H1 (cell line): ENCODE measurements at regions of chr12 and their contacts with region 1.

Region 1: GRCh38 chr12:98606357-98606988 is 13.0 kb downstream of the SLC25A3 start:
- DNase-seq: no peak
- H3K4me3 ChIP-seq: no peak overlapping the region
- H3K27ac ChIP-seq: no peak overlapping the region
- H3K4me1 ChIP-seq: no peaks in the 10 kb centered on the region
- H3K27me3 ChIP-seq: no peaks in the 10 kb centered on the region
- CTCF ChIP-seq: no peak
- EP300 ChIP-seq: no peak
- POLR2A ChIP-seq: no peak
- RAD21 ChIP-seq: no peak

Region 2: GRCh38 chr12:98418357-98419075 is 188.0 kb before region 1 on chr12:
- CTCF ChIA-PET with region 1: no interaction called
- POLR2A ChIA-PET with region 1: no interaction called
- DNase-seq: no peak
- H3K4me3 ChIP-seq: no peak overlapping the region
- H3K27ac ChIP-seq: no peak overlapping the region
- H3K4me1 ChIP-seq: peaks cover 0 to 4% (median 3%) of the 10 kb centered on the region in 4 experiments; a peak in 4 of 7 replicates
- H3K27me3 ChIP-seq: no peaks in the 10 kb centered on the region
- CTCF ChIP-seq: no peak
- EP300 ChIP-seq: no peak
- POLR2A ChIP-seq: no peak
- RAD21 ChIP-seq: no peak

Region 3: DNA sequence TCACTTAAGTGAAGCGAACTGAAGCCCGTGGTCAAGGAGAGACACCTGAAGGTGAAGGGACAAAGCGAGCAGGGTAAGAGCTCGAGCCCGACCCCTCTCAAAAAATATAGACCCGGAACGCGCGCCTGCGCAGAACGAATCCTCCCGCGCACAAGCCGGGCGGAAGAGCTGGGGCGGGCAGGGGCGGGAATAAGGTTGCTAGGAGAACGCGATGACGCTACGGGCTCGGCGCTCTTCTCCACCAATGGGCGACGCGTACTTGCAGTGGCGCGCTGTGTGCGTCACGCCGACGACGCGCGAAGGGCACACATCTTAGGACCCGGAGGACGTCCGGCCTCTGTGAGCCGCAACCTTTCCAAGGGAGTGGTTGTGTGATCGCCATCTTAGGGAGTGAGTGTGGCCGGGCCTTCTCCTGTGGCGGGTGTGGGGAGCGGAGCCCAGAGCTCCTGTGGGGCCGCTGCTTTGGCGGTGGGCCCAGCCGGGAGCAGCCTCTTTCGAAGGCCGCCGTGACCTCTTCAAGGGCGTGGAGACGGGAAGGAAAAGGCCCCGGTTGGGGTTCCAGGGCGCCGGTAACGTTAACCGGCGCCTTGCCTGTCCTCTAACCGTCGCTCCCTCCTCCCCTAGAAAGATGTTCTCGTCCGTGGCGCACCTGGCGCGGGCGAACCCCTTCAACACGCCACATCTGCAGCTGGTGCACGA is 13.0 kb before region 1 on chr12 and contains the start of gene SLC25A3:
- CTCF ChIA-PET with region 1: interaction called, 8 read pairs
- POLR2A ChIA-PET with region 1: interaction called, 48 read pairs
- DNase-seq: peak; percentile 90 to 96
- H3K4me3 ChIP-seq: peak within 1 kb of the TSS; percentile 73 to 99 (median 91)
- H3K27ac ChIP-seq: peak within 1 kb of the TSS; percentile 91
- H3K4me1 ChIP-seq: peaks cover 0 to 9% (median 4%) of the 10 kb centered on the region in 4 experiments; a peak in 2 of 7 replicates
- H3K27me3 ChIP-seq: no peaks in the 10 kb centered on the region
- CTCF ChIP-seq: no peak
- EP300 ChIP-seq: peak in 1 of 2 experiments; percentile 11; a peak in 1 of 3 replicates
- POLR2A ChIP-seq: peak; percentile 99
- RAD21 ChIP-seq: 0 out of 4 replicates have a peak, but pooled peaks of 1 of the 2 experiments have one; percentile 8
- total RNA-seq, gene SLC25A3: 709 and 719 TPM in 2 replicates

Region 4: DNA sequence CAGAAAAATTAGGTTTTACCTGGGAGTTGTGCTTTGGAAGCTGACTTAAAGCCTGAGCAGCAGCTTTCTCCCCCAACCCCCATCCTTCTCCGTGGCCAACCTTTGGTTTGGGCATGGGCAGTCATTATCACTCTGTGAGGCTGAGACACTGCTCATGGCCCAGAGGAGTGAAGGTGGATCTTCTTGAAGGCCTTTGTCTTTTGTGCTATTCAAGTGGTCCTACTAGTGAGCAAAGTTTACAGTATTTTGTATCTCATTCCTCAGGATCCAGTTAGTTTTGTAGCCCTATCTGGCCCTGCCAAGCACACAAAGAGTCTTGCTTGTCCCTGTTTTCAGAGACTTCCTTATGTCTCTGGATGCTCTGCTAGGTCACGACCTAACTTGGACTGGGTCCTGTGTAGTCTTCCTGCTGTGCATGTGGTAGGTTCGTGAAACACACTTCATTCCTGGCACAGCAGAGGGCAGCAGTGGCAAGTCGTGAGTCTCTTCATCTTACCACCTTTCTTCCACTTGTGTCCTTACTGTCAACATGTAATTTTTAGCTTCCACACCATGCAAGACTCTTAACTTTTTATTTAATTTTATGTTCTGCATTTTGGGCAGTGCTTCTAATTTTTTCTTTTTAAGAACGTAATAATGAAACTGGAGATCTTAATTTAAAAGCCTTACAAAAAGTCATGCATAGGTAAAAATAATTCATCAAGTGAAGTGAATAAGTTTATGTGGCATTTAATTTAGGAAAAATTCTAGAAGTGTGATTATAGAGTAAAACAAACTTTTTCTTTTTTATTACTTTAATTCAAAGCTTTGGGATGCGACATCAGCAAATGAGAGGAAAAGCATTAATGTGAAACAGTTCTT is 92.4 kb after region 1 on chr12:
- CTCF ChIA-PET with region 1: no interaction called
- POLR2A ChIA-PET with region 1: no interaction called
- DNase-seq: peak in 1 of 2 experiments; percentile 54
- H3K4me3 ChIP-seq: no peak overlapping the region
- H3K27ac ChIP-seq: no peak overlapping the region
- H3K4me1 ChIP-seq: peaks cover 2 to 11% (median 5%) of the 10 kb centered on the region in 4 experiments; a peak in 3 of 7 replicates
- H3K27me3 ChIP-seq: no peaks in the 10 kb centered on the region
- CTCF ChIP-seq: peak; percentile 66 to 85 (median 76)
- EP300 ChIP-seq: no peak
- POLR2A ChIP-seq: no peak
- RAD21 ChIP-seq: peak; percentile 82